ENCODE measurements at regions of chr4 and their contacts with region 1.

Region 1: DNA sequence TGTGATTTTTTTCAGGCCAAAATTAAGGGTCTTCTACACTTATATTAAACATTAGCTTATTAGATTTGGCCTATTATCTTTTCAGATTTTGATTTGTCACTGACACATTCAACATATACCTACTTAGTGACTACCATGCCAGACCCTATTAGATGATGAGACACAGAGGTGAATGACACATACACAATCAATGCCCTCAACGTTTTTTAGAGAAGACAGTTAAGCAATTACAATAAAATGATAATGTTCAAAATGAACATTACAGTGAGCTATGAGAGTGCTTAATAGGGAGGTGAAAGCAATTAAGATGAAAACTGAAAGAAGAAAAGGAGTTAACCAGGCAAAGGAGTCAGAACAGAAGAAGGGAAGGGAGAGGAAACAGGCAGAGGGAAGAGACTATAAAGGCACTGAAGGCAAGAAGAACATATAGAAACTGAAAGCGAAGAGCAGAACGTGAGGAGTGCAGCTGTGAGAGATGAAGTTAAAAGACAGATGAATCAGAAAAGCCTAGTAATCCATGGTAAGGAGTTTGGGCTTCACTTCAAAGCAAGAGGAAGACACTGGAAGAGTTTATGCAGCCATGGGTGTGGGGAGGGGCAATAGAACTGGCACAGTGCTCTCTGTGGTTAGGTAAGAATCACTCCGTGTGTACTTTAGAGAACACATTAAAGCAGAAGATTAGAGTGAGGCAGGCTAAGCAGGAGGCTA is 119.0 kb downstream of the REELD1 start:
- DNase-seq: peak; percentile 7
- ATAC-seq: peak; percentile 44; the same call in 1 of the 3 replicates
- H3K4me3 ChIP-seq: no peak overlapping the region
- H3K27ac ChIP-seq: no peak overlapping the region
- H3K4me1 ChIP-seq: peaks cover 25% of the 10 kb centered on the region
- H3K27me3 ChIP-seq: no peaks in the 10 kb centered on the region
- CTCF ChIP-seq: no peak
- EP300 ChIP-seq: no peak
- POLR2A ChIP-seq: no peak
- RAD21 ChIP-seq: no peak

Region 2: GRCh38 chr4:146567396-146567795 is 234.1 kb after region 1 on chr4:
- CTCF ChIA-PET with region 1: no interaction called
- POLR2A ChIA-PET with region 1: no interaction called
- in situ Hi-C with region 1: no loop called
- intact Hi-C with region 1: loop called (anchors 1 kb)
- DNase-seq: no peak
- ATAC-seq: no peak
- H3K4me3 ChIP-seq: no peak overlapping the region
- H3K27ac ChIP-seq: no peak overlapping the region
- H3K4me1 ChIP-seq: no peaks in the 10 kb centered on the region
- H3K27me3 ChIP-seq: peaks cover 0 to 3% of the 10 kb centered on the region in 2 experiments; a peak in 1 of 5 replicates
- CTCF ChIP-seq: no peak
- EP300 ChIP-seq: no peak
- POLR2A ChIP-seq: no peak
- RAD21 ChIP-seq: no peak

Measured in HepG2 (cell line).